RWPE1 (cell line): ENCODE measurements at regions of chr18 and their contacts with region 1.

Region 1: GRCh38 chr18:59402432-59403090 is 43.5 kb upstream of the LMAN1 start:
- DNase-seq: peak; percentile 59
- H3K27ac ChIP-seq: no peak overlapping the region
- CTCF ChIP-seq: peak; percentile 88

Region 2: DNA sequence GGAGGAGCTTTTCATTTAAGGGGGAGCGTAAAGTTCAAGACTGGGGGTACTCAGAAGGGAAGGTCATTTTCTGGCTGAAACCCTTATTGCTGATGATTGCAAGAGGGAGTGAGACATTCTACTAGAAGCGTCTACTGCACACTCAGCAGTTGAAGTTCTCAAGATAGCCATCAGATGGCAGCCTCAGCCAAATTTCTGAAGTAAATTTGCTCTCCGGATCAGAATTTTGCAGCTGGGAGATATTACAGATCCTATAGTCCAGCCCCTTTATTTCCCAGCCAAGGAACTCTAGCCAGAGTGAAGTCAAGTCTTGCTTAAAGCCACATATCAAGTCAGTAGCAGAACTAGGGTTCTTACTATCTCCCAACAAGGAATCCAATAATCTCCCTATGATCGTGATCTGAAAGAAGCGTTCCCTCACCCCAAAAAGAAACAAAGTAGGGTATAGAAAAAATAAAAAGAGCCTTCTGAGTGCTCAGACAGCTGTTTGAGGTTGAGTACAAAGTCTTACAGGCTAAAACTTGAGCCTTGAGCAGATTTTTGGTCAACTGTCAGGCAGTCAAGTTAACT is 153.3 kb before region 1 on chr18:
- CTCF ChIA-PET with region 1: interaction called, 29 read pairs
- POLR2A ChIA-PET with region 1: no interaction called
- DNase-seq: peak; percentile 21
- H3K27ac ChIP-seq: no peak overlapping the region
- CTCF ChIP-seq: peak; percentile 73

Region 3: GRCh38 chr18:59308248-59308937 is 94.2 kb before region 1 on chr18:
- CTCF ChIA-PET with region 1: interaction called, 35 read pairs
- POLR2A ChIA-PET with region 1: no interaction called
- DNase-seq: peak; percentile 50
- H3K27ac ChIP-seq: no peak overlapping the region
- CTCF ChIP-seq: peak; percentile 89